Caco-2 (cell line): ENCODE measurements at regions of chr5 and their contacts with region 1.

Region 1: GRCh38 chr5:13478831-13479465 is 465.5 kb downstream of the DNAH5 start:
- DNase-seq: peak; percentile 39 to 60
- H3K4me3 ChIP-seq: no peak overlapping the region
- H3K4me3 Mint-ChIP-seq: no peak overlapping the region
- H3K27ac Mint-ChIP-seq: no peak overlapping the region
- H3K4me1 ChIP-seq: no peaks in the 10 kb centered on the region
- H3K4me1 Mint-ChIP-seq: no peaks in the 10 kb centered on the region
- H3K27me3 ChIP-seq: no peaks in the 10 kb centered on the region
- H3K27me3 Mint-ChIP-seq: peaks cover 3% of the 10 kb centered on the region
- CTCF ChIP-seq: peak; percentile 67 to 81

Region 2: DNA sequence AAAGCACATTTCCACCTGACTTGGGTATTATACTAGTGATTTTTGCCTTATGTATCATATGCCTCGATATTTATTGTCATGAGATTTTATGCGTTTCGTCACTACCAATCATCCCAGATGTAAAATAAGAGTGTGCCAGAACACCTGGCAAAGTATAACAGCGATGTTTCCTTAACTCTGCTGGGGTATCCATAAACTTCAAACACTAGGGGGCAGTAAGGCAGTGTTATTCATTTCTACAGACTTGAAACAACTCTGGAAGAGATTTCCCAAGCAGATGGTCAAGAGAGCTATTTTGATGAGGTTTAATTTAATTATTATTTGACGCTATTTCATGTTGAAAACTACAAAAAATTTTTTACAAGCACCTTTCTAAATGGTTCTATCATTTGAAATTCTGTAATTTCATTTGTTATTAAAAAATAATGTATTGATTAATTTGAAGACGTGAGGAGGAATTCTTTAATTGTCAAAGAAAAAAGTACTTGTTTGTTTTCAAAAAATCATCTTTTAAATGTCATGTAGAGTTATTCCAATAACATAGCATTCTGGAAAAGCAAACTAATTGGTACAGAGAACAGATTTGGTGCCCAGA is 1186.2 kb before region 1 on chr5:
- CTCF ChIA-PET with region 1: interaction called, 3 read pairs
- POLR2A ChIA-PET with region 1: no interaction called
- intact Hi-C with region 1: loop called (anchors 5 kb)
- DNase-seq: peak in 1 of 2 experiments; percentile 42
- H3K4me3 ChIP-seq: no peak overlapping the region
- H3K4me3 Mint-ChIP-seq: no peak overlapping the region
- H3K27ac Mint-ChIP-seq: no peak overlapping the region
- H3K4me1 ChIP-seq: no peaks in the 10 kb centered on the region
- H3K4me1 Mint-ChIP-seq: no peaks in the 10 kb centered on the region
- H3K27me3 ChIP-seq: no peaks in the 10 kb centered on the region
- H3K27me3 Mint-ChIP-seq: no peaks in the 10 kb centered on the region
- CTCF ChIP-seq: peak in 1 of 2 experiments; percentile 38

Region 3: GRCh38 chr5:12951846-12952245 is 527.1 kb before region 1 on chr5:
- CTCF ChIA-PET with region 1: no interaction called
- POLR2A ChIA-PET with region 1: no interaction called
- intact Hi-C with region 1: loop called (anchors 5 kb)
- DNase-seq: no peak
- H3K4me3 ChIP-seq: no peak overlapping the region
- H3K4me3 Mint-ChIP-seq: no peak overlapping the region
- H3K27ac Mint-ChIP-seq: no peak overlapping the region
- H3K4me1 ChIP-seq: no peaks in the 10 kb centered on the region
- H3K4me1 Mint-ChIP-seq: no peaks in the 10 kb centered on the region
- H3K27me3 ChIP-seq: no peaks in the 10 kb centered on the region
- H3K27me3 Mint-ChIP-seq: no peaks in the 10 kb centered on the region
- CTCF ChIP-seq: no peak

Region 4: GRCh38 chr5:13278148-13278547 is 200.8 kb before region 1 on chr5:
- CTCF ChIA-PET with region 1: no interaction called
- POLR2A ChIA-PET with region 1: no interaction called
- intact Hi-C with region 1: loop called (anchors 10 kb)
- DNase-seq: no peak
- H3K4me3 ChIP-seq: no peak overlapping the region
- H3K4me3 Mint-ChIP-seq: no peak overlapping the region
- H3K27ac Mint-ChIP-seq: no peak overlapping the region
- H3K4me1 ChIP-seq: no peaks in the 10 kb centered on the region
- H3K4me1 Mint-ChIP-seq: no peaks in the 10 kb centered on the region
- H3K27me3 ChIP-seq: no peaks in the 10 kb centered on the region
- H3K27me3 Mint-ChIP-seq: peaks cover 3% of the 10 kb centered on the region
- CTCF ChIP-seq: peak; percentile 30 to 48

Region 5: GRCh38 chr5:13957032-13957645 is 478.2 kb after region 1 on chr5:
- CTCF ChIA-PET with region 1: interaction called, 8 read pairs
- POLR2A ChIA-PET with region 1: no interaction called
- intact Hi-C with region 1: loop called (anchors 1 kb)
- DNase-seq: peak in 1 of 2 experiments; percentile 56
- H3K4me3 ChIP-seq: no peak overlapping the region
- H3K4me3 Mint-ChIP-seq: no peak overlapping the region
- H3K27ac Mint-ChIP-seq: no peak overlapping the region
- H3K4me1 ChIP-seq: peaks cover 10% of the 10 kb centered on the region
- H3K4me1 Mint-ChIP-seq: no peaks in the 10 kb centered on the region
- H3K27me3 ChIP-seq: no peaks in the 10 kb centered on the region
- H3K27me3 Mint-ChIP-seq: peaks cover 4% of the 10 kb centered on the region
- CTCF ChIP-seq: peak; percentile 73 to 84